OCI-LY7 (cell line): ENCODE measurements at regions of chr1 and their contacts with region 1.

Region 1: DNA sequence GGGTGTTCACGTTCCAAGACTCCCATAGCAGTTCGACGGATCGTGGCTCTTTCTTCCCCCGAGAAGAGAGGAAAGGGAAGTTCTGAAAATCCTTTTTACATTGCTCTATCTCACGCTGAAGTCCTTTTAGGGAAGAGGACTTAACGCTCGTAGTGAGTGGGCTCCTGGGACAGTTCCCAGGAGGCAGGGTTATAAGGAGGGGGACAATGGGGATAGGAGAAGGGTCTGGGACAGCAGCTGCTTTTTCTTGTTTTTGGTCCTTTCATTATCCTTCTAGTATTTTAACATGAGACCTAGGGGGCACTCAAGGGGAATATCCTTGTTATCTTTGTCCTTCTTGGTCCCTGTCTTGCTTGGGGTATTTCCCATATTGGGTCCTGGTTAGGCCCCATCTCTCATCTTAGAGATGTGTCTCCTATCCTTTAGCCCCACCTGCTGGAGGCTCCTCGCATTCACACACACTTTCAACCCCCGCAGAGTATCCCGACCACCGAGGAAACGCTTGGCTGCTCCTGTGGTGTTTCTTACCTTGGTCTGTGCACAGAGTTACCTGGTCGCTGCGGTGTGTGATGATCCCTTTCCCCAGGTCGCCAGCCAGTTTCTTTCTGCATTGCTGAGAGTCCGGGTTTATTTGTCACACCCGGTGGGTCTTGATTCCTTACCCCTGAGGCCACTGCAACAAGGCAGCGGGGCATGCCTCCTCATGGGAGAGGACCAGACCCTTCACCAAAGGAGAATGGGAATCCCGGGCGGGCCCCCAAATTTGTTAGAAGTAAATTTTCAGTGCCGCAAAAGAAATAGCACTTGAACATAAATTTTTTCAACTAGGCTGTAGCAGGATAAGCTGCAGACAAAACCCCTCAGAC is 29.7 kb downstream of the SCCPDH start:
- DNase-seq: peak; percentile 77
- H3K4me3 ChIP-seq: no peak overlapping the region
- H3K27ac ChIP-seq: no peak overlapping the region
- H3K4me1 ChIP-seq: peaks cover 6% of the 10 kb centered on the region
- CTCF ChIP-seq: peak; percentile 84

Region 2: DNA sequence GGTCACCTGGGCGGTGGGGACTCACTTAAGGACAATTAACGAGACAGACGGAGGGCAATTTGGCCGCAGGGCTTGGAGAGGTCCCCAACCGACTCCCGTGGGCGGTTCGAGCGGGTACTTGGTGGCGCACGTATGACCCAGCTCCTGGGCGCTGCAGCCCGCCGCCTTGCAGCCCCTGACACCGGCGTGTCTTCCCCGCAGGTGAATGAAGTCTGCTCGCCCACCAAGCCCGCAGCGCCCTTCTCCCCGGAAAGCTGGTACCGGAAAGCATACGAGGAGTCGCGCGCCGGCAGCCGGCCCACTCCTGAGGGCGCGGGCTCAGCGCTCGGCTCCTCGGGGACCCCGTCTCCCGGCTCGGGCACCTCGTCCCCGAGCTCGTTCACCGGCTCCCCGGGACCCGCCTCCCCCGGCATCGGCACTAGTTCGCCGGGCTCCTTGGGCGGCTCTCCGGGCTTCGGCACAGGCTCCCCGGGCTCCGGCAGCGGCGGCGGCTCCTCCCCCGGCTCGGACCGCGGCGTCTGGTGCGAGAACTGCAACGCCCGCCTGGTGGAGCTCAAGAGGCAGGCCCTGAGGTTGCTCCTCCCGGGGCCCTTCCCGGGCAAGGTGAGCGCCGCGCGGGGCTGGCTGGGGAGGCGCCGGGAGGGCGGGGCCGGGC is 1597.7 kb before region 1 on chr1:
- CTCF ChIA-PET with region 1: no interaction called
- POLR2A ChIA-PET with region 1: no interaction called
- intact Hi-C with region 1: loop called (anchors 5 kb)
- DNase-seq: peak; percentile 85
- H3K4me3 ChIP-seq: peak overlapping the region; percentile 66
- H3K27ac ChIP-seq: no peak overlapping the region
- H3K4me1 ChIP-seq: peaks cover 7% of the 10 kb centered on the region
- CTCF ChIP-seq: peak; percentile 72

Region 3: DNA sequence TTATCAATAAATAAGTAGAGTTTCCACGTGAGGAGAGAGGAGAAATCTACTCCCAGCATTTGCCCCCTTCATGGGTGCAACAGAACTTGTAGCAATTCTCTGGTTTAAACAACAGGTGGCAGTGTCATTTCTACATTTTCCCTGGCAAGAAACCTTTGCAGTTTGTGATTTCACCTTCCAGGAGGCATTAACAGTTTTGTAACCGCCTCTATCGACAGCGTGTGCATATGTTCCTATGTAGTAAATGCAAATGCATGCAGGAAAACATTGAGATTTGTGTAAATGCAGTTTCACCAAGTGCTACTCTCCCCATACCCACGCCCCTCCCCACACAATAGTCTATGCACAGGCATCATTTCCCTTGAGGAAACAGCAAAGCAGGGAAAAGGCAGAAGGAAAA is 741.6 kb before region 1 on chr1:
- CTCF ChIA-PET with region 1: no interaction called
- POLR2A ChIA-PET with region 1: no interaction called
- intact Hi-C with region 1: loop called (anchors 5 kb)
- DNase-seq: peak; percentile 26
- H3K4me3 ChIP-seq: no peak overlapping the region
- H3K27ac ChIP-seq: no peak overlapping the region
- H3K4me1 ChIP-seq: no peaks in the 10 kb centered on the region
- CTCF ChIP-seq: peak; percentile 68

Region 4: DNA sequence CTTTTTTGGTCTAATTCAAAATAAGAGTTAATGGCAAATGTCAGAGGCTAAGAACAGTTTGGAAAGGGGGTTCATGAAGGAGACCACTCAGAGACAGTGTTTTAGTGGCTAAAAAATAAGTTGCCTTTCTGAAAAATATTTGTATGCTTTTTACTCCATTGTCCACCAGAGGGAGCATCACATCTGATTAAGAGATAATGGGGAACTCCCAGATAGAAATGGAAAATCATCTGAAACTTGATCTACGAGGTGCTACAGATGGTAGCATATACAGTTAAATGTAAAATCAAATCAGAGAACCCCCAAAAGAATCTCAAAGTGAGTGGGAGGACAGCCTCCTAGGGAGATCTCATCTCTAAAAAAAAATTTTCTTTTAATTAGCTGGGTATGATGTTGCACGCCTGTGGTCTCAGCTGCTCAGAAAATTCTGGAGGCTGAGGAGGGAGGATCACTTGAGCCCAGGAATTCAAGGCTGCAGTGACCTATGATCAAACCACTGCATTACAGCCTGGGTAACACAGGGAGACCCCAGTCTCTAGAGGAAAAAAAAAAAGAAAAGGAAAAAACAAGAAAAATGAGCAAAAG is 256.5 kb before region 1 on chr1:
- CTCF ChIA-PET with region 1: no interaction called
- POLR2A ChIA-PET with region 1: interaction called, 3 read pairs
- intact Hi-C with region 1: loop called (anchors 1 kb)
- DNase-seq: peak; percentile 83
- H3K4me3 ChIP-seq: no peak overlapping the region
- H3K27ac ChIP-seq: no peak overlapping the region
- H3K4me1 ChIP-seq: peaks cover 4% of the 10 kb centered on the region
- CTCF ChIP-seq: peak; percentile 95

Region 5: GRCh38 chr1:246689409-246690008 is 64.4 kb before region 1 on chr1:
- CTCF ChIA-PET with region 1: no interaction called
- POLR2A ChIA-PET with region 1: interaction called, 6 read pairs
- intact Hi-C with region 1: loop called (anchors 1 kb)
- DNase-seq: peak; percentile 77
- H3K4me3 ChIP-seq: no peak overlapping the region
- H3K27ac ChIP-seq: no peak overlapping the region
- H3K4me1 ChIP-seq: no peaks in the 10 kb centered on the region
- CTCF ChIP-seq: peak; percentile 90